ENCODE measurements at regions of chr2 and their contacts with region 1.

Region 1: GRCh38 chr2:38076606-38077430 is 867 bp upstream of the CYP1B1 start:
- DNase-seq: peak; percentile 81
- H3K4me3 Mint-ChIP-seq: peak overlapping the region; percentile 84
- H3K27ac Mint-ChIP-seq: peak overlapping the region; percentile 85
- H3K4me1 Mint-ChIP-seq: peaks cover 45% of the 10 kb centered on the region
- H3K27me3 Mint-ChIP-seq: peaks cover 43% of the 10 kb centered on the region

Region 2: DNA sequence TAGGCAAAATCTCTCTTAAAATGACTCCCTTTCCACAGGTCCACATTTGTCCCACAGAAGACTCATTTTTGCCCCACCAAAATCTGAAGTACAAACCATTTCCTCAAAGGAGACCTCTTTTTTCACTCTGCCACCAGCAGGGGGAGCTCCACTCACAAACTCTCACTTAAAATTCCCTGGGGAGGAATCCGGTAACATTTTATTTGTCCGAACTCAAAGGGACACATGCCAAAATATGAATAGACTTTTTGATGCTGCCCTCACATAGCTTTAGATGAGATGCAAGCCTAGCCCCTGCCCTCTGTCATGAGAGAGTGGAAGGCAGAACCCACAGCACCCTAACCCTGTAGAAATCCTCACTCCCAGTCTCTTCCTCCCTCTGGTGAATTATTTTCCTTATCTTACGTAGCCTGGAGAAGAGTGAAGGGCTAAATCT is 94.7 kb before region 1 on chr2:
- intact Hi-C with region 1: loop called (anchors 5 kb)
- DNase-seq: peak; percentile 31
- H3K4me3 Mint-ChIP-seq: no peak overlapping the region
- H3K27ac Mint-ChIP-seq: no peak overlapping the region
- H3K4me1 Mint-ChIP-seq: peaks cover 9% of the 10 kb centered on the region
- H3K27me3 Mint-ChIP-seq: peaks cover 22% of the 10 kb centered on the region

Region 3: DNA sequence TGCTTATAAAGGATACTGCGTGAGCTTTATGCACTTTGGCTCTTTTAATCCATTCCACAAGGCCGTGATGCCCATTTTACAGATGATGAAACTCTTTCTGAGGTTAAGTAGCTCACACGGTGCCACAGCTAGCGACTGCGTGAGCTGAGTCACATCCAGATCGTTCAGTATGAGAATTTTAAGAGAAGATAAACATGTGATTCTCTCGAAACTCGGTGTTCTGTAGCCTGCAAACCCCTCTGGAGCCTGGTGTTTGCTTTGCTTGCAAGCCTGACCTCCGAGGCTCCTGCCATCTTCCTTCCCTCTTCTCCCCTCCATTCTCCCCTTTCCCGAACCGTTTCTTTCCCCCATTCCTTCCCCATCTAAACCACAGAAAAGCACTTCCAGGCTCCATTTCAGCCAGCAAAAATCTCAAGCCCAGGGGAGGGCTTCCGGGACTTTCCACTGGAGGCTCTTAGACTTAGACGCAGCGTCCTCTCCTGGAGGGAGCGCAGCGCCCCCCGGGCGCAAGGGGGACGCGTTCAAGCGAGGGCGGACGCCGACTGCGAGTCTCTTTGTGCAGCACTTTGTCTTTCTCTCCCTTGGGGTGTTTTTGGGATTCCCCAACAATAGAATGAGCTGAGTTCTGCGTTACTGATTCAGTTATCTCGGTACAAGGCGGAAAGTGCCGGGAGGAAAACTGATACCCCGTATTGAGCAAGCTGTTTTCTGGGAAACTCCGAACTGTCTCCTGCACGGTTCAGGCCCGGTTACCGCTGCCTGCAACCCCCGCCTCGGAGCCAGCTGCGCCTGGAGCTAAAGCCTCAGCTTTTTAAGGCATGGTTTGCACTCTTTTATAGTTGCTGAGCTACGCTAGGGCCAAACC is 38.8 kb before region 1 on chr2:
- intact Hi-C with region 1: loop called (anchors 1 kb)
- DNase-seq: no peak
- H3K4me3 Mint-ChIP-seq: peak overlapping the region; percentile 67
- H3K27ac Mint-ChIP-seq: peak overlapping the region; percentile 90
- H3K4me1 Mint-ChIP-seq: peaks cover 37% of the 10 kb centered on the region
- H3K27me3 Mint-ChIP-seq: peaks cover 24% of the 10 kb centered on the region

Region 4: GRCh38 chr2:38106405-38107094 is 29.7 kb after region 1 on chr2:
- intact Hi-C with region 1: loop called (anchors 2 kb)
- DNase-seq: no peak
- H3K4me3 Mint-ChIP-seq: no peak overlapping the region
- H3K27ac Mint-ChIP-seq: peak overlapping the region; percentile 62
- H3K4me1 Mint-ChIP-seq: peaks cover 28% of the 10 kb centered on the region
- H3K27me3 Mint-ChIP-seq: peaks cover 15% of the 10 kb centered on the region

Region 5: GRCh38 chr2:38115216-38116032 is 38.6 kb after region 1 on chr2:
- intact Hi-C with region 1: loop called (anchors 2 kb)
- DNase-seq: peak; percentile 59
- H3K4me3 Mint-ChIP-seq: no peak overlapping the region
- H3K27ac Mint-ChIP-seq: no peak overlapping the region
- H3K4me1 Mint-ChIP-seq: peaks cover 10% of the 10 kb centered on the region
- H3K27me3 Mint-ChIP-seq: peaks cover 23% of the 10 kb centered on the region

Region 6: DNA sequence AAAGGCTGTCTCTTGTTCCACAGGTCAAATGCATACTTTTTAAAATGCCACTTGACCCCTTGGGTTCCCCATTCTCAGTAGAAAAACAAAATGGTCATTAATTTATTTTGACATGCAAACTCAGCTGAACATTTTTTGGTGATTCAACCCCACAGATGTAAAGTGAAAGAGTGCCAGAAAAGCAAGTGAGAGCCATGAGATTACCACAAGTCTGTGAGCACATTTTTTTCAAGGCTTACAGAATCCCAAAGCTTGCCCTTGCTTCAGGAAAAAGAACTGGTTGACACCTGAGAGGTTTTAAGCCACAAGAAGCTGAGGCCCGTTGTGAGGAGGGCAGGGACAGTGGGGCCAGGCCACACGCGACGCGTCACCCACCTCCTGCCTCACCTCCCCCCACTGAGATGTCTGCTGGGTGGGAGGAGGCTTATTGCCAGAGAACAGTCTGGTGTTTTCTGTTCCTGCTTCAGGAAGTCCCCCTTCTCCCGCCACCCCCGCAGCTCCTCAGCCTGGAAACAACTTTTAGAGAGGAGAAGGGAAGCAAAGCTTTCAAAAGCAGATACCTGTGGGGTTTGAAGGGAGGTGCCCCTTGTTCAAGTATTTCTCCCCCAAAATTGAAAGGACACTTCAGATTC is 69.6 kb after region 1 on chr2:
- intact Hi-C with region 1: loop called (anchors 1 kb)
- DNase-seq: no peak
- H3K4me3 Mint-ChIP-seq: no peak overlapping the region
- H3K27ac Mint-ChIP-seq: peak overlapping the region; percentile 47
- H3K4me1 Mint-ChIP-seq: peaks cover 16% of the 10 kb centered on the region
- H3K27me3 Mint-ChIP-seq: no peaks in the 10 kb centered on the region

Region 7: DNA sequence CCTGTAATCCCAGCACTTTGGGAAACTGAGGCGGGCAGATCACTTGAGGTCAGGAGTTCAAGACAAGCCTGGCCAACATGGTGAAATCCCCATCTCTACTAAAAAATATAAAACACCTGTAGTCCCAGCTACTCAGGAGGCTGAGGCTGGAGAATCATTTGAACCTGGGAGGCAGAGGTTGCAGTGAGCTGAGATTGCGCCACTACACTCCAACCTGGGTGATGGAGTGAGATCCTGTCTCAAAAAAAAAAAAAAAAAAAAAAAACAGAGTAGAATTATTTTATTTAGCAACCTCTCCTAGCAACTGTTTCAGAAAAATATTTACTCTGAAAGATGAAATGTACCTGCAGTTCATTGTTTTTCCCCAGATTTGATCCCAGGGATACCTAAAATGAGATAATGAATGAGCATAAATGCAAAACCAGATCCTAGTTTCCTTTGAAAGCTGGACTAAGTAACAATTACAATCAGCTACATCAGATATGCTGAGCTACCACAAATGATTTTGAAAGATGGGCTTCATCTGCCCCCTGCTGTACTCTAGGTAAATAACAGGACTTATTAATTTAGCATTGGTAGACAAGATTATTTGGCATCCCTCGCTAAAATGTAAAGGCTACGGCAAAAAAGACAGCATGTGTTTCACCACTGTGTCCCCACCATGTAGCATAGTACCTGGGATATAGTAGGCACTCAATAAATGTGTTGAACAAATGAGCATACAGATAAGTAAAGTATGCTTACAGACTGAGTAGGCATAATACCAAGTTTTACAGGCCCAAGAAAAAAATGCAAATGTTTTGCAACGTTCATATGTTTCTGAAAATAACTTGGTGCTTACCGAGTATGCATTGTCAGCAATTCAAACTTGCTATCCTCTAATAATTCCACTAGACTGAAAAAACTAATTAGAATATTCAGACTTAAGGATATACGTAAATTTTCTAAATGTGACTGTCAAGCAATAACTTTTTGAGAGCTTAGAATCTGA is 197.8 kb after region 1 on chr2:
- intact Hi-C with region 1: loop called (anchors 2 kb)
- DNase-seq: no peak
- H3K4me3 Mint-ChIP-seq: no peak overlapping the region
- H3K27ac Mint-ChIP-seq: no peak overlapping the region
- H3K4me1 Mint-ChIP-seq: peaks cover 12% of the 10 kb centered on the region
- H3K27me3 Mint-ChIP-seq: peaks cover 5% of the 10 kb centered on the region